ENCODE measurements at regions of chr5 and their contacts with region 1.

Region 1: DNA sequence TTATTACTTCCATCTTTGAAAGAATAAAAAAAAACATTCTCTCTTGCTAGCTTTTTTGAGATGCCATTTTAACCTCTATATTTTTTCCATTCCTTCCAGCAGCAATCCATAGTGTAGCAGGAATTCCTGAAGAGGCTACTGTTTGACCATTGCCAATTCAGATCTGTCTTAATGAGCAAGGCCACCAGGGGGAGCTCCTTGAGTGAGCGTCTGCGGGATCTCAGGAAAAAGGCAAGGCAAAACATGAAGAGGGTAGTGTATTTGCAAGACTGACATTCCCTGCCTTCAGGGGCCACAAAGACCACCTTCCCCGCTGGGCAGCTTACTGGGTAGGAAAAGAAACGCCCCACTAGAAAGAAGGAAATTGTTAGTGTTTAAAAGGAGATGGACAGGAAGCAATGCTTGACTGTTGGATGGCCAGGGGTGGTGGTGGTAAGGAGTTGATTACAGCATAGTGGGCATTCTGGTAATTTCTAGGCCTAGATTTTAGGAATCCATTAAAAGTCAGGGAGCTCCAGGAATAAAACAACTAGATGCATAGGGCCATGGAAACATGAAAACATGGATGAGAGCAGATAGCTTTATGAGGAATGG is 206.6 kb upstream of the HAPLN1 start:
- DNase-seq: peak; percentile 56
- ATAC-seq: no peak
- H3K4me3 Mint-ChIP-seq: no peak overlapping the region
- H3K27ac Mint-ChIP-seq: no peak overlapping the region
- H3K4me1 Mint-ChIP-seq: no peaks in the 10 kb centered on the region
- H3K27me3 Mint-ChIP-seq: peaks cover 3% of the 10 kb centered on the region

Region 2: DNA sequence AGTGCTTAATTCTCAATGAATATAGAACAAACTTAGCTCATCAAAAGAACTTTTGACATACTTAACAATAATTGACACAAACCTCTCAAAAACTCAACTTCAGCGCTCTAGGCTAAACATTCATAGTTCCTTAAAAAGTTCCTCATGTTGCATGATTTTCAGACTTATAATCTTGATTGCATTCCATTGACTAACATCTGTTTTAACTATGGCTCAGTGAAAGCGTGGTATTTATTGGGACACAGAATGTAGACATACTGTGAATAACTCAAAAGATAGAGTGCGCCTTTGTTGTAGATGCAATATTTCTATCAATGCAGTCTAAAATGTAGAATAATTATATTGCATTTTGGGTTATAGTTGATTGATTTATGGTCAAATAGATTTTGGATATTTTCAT is 20.5 kb after region 1 on chr5:
- CTCF ChIA-PET with region 1: no interaction called
- POLR2A ChIA-PET with region 1: no interaction called
- intact Hi-C with region 1: no loop called
- DNase-seq: no peak
- ATAC-seq: no peak
- H3K4me3 Mint-ChIP-seq: no peak overlapping the region
- H3K27ac Mint-ChIP-seq: no peak overlapping the region
- H3K4me1 Mint-ChIP-seq: no peaks in the 10 kb centered on the region
- H3K27me3 Mint-ChIP-seq: peaks cover 1% of the 10 kb centered on the region

Region 3: GRCh38 chr5:83964271-83964670 is 37.0 kb after region 1 on chr5:
- CTCF ChIA-PET with region 1: no interaction called
- POLR2A ChIA-PET with region 1: no interaction called
- intact Hi-C with region 1: no loop called
- DNase-seq: no peak
- ATAC-seq: no peak
- H3K4me3 Mint-ChIP-seq: no peak overlapping the region
- H3K27ac Mint-ChIP-seq: no peak overlapping the region
- H3K4me1 Mint-ChIP-seq: no peaks in the 10 kb centered on the region
- H3K27me3 Mint-ChIP-seq: no peaks in the 10 kb centered on the region

Region 4: DNA sequence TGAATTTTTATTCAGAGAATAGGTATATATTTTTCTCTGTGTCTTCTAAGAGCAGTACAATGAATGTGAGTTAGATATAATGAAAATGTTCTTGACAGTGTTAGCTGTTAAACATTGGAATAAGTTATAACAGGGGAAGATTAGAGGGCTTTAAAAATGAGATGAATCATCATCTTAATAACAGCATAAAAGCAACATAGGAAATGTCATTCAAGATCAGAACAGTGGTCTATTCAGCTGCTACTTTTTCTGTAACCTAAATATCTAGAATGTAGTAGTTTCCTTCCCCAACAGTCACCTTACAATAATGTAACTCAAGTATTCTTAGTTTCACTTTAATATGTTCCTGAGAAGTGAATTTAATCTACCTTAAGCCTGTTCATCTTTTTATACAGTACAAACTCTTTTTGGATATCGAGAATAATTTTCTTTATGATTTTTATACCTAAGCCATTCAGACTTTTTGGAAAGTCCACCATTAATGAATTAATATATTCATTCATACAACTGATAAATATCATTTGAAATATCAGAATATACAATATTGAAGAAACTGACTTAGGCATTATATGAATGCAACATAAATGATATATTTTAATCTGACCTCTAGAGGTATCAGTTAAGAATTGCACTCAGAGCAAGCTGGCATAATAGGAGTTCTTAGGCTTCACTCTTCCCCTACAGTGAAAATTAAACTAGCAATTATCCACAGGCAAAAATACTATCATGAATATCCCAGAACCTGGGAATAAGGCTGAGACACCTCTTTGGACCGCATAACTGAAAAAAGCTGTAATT is 523.6 kb after region 1 on chr5:
- CTCF ChIA-PET with region 1: no interaction called
- POLR2A ChIA-PET with region 1: no interaction called
- intact Hi-C with region 1: loop called in 1 of 2 experiments (anchors 10 kb)
- DNase-seq: no peak
- ATAC-seq: no peak
- H3K4me3 Mint-ChIP-seq: no peak overlapping the region
- H3K27ac Mint-ChIP-seq: no peak overlapping the region
- H3K4me1 Mint-ChIP-seq: no peaks in the 10 kb centered on the region
- H3K27me3 Mint-ChIP-seq: no peaks in the 10 kb centered on the region

Measured in activated CD4-positive, alpha-beta T cell treated with anti-CD3 and anti-CD28 coated beads for 36 hours (primary cell).